Heart left ventricle (tissue), 16 donors: ENCODE measurements at regions of chr10 and their contacts with region 1.

Region 1: DNA sequence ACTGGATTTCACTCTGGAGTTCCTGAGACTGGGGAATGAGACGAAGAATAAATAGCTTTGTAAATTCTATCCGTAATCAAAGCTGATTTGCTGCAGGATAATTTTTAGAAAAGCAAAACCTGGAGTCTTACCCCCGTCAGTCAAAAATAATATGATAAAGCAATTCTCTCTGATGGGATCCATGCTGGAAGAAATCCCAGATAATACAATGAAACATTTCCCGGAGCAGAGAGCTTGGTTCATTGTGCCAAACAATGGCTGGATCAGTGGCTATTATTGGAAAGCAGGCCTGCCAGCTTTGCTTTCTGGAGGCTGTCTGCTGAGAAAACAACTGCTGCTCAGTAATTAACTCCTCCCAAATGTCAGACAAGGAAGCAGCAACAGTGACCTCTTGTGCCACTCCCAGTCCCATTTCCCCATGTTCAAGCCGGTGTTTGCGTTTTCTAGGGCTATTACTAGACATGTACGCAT is 609.4 kb upstream of the PCDH15 start:
- DNase-seq: peak; percentile 42 to 75 (median 65)
- ATAC-seq: peak; percentile 99 to 100 (median 100)
- H3K4me3 ChIP-seq: peak overlapping the region in 7 of 12 donors; percentile 1 to 24 (median 20)
- H3K27ac ChIP-seq: peak overlapping the region; percentile 24 to 65 (median 54)
- H3K4me1 ChIP-seq: peaks cover 0 to 13% (median 6%) of the 10 kb centered on the region in 12 donors
- H3K27me3 ChIP-seq: no peaks in the 10 kb centered on the region
- CTCF ChIP-seq: peak in 10 of 12 donors; percentile 7 to 67 (median 48)
- POLR2A ChIP-seq: no peak

Region 2: DNA sequence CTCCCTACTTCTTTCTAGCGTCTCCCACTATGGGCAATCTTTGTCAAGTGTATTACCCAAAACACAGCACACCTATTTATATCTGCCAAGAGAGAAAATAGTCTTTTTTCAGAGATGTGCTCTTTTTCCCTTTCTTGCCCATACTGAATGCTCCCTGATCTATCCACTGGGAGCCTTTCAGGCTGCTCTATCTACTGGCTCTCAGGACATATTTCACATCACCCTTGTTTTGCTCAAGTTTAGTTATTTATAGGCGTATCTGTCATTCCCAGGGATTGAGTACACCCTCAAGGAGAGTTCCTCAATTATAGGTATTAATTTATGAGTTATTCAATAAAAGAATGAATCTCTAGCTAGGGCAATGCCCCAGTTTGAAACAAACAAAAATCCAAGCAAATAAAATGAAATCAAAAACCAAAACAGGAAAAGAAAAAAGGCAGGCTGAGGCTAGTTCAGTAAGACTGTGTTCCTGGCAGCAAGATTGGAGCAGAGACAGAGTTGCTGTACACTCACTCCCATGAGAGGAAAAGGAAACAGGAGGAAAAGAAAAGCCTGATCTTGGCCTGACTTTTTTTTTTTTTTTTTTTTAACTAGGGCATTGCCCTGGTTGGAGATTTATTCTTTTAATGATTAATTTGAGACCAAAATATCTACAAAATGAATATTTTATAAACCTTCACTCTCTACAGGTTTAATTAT is 56.5 kb after region 1 on chr10:
- intact Hi-C with region 1: loop called in 2 of 10 experiments (anchors 5 to 10 kb)
- DNase-seq: peak in 1 of 5 donors; percentile 11
- ATAC-seq: peak in 3 of 4 donors; percentile 64 to 81 (median 80)
- H3K4me3 ChIP-seq: peak overlapping the region in 2 of 12 donors; percentile 3 to 11
- H3K27ac ChIP-seq: peak overlapping the region in 10 of 12 donors; percentile 8 to 67 (median 42)
- H3K4me1 ChIP-seq: peaks cover 0 to 14% (median 0%) of the 10 kb centered on the region in 12 donors
- H3K27me3 ChIP-seq: no peaks in the 10 kb centered on the region
- CTCF ChIP-seq: no peak
- POLR2A ChIP-seq: no peak